Gastrocnemius medialis (tissue), 4 donors: ENCODE measurements at regions of chr17 and their contacts with region 1.

Region 1: DNA sequence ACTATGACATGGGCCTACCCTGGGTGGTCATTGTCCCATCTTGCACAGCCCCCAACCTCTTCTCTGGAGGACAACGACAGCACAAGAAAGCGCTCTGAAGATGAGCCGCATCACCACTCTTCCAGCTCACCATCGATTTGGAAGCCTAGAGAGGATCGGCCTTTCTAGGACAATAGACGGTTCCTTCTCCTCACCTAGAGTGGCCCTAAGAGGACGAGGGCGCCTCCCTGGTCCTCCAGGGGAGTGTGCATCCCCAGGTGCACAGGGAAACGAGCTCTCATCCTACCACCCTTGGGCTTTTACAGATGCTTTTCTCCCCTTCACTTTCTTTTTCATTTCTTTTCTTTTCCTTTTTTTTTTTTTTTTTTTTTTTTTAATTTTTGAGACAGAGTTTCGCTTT is 20.3 kb upstream of the SLC52A1 start:
- DNase-seq: no peak
- ATAC-seq: no peak
- H3K4me3 ChIP-seq: no peak overlapping the region
- H3K27ac ChIP-seq: no peak overlapping the region
- H3K4me1 ChIP-seq: no peaks in the 10 kb centered on the region
- H3K27me3 ChIP-seq: no peaks in the 10 kb centered on the region
- CTCF ChIP-seq: no peak
- POLR2A ChIP-seq: no peak

Region 2: GRCh38 chr17:4913994-4914393 is 141.5 kb before region 1 on chr17:
- in situ Hi-C with region 1: loop called in 3 of 4 experiments (anchors 5 to 10 kb)
- intact Hi-C with region 1: no loop called
- DNase-seq: no peak
- ATAC-seq: no peak
- H3K4me3 ChIP-seq: no peak overlapping the region
- H3K27ac ChIP-seq: no peak overlapping the region
- H3K4me1 ChIP-seq: peaks cover 4 to 6% of the 10 kb centered on the region in 2 donors
- H3K27me3 ChIP-seq: no peaks in the 10 kb centered on the region
- CTCF ChIP-seq: no peak
- POLR2A ChIP-seq: no peak

Region 3: DNA sequence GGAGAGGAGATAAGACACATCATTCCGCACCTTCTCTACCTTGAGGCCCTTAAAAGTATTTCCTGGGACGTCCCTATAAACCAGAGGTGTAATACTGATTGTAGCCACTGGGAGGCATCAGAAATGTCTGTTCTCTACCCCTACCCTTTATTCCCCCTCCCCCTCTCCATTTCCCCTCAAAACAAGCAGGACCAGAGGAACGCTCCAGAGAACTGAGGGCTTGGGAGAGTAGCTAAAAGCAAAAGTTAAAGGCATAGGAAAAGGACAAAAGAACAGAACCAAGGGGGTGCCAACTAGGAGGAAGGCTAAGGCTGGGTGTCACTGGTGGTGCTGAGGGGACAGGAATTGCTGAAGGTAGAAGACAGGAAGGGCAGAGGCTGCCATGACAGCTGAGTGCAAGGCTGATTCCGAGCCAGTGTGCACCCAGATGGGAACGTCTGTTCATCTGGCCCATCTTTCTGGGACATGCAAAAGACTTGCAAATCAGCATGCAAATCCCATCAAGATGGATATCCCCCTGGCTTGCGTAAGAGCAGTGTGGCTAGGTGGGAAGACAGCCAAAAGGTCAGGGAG is 74.8 kb before region 1 on chr17:
- in situ Hi-C with region 1: loop called in 2 of 4 experiments (anchors 5 to 10 kb)
- intact Hi-C with region 1: no loop called
- DNase-seq: no peak
- ATAC-seq: peak; percentile 65 to 67
- H3K4me3 ChIP-seq: no peak overlapping the region
- H3K27ac ChIP-seq: peak overlapping the region in 1 of 4 donors; percentile 43
- H3K4me1 ChIP-seq: peaks cover 5% of the 10 kb centered on the region in 2 donors
- H3K27me3 ChIP-seq: no peaks in the 10 kb centered on the region
- CTCF ChIP-seq: peak; percentile 75 to 88 (median 85)
- POLR2A ChIP-seq: no peak